ENCODE measurements at regions of chr2 and their contacts with region 1.

Region 1: DNA sequence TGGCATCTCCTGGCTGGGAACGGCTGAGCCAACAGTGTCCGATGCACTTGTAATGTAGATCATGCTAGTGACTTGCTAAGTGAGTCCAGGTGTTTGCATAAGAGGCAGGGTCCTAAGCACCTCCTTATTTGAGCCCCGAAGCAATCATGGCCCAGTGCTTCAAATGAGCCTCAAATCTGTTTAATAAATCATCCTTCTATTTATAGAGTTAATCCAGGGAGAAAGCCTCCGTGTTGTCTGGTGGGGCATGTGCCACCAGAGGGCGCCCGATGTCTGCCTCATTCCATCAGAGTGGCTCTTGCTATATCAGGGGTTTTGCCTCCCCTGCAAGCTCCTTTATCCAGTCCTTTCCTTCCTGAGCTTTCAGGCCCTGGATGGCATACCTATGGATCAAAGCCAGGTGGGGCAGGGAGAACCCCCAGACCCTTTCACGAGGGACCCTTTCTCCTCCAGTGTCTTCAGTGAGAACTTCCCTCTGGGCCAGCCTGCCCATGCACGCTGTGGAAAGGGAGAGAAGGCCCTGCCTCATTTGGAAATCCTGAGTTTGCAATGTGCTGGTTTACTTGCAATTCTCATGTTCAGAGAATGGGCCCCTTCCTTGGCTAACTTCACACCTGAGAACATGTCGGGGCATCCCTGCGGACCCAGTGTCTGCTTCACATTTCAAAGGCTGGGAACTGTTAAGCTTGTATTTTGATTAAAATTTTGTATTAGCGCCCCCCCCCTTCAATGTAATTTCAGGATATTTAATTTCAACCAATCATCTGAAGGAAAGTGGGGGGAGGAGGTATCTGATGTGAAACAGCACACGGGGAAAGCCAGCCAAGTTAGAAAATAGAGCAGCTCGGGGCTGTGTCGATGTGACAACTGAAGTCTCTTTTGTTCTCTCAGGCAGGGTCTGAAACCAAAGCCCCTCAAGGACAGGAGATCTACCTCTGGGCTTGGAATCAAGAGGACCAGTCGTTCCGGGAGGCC is 39.7 kb downstream of the RDH14 start:
- DNase-seq: peak; percentile 88
- ATAC-seq: peak; percentile 68
- H3K4me3 ChIP-seq: no peak overlapping the region
- H3K27ac ChIP-seq: no peak overlapping the region
- H3K4me1 ChIP-seq: peaks cover 35% of the 10 kb centered on the region
- H3K27me3 ChIP-seq: no peaks in the 10 kb centered on the region
- CTCF ChIP-seq: peak; percentile 97

Region 2: GRCh38 chr2:18387441-18388206 is 133.1 kb before region 1 on chr2:
- CTCF ChIA-PET with region 1: no interaction called
- POLR2A ChIA-PET with region 1: no interaction called
- intact Hi-C with region 1: loop called (anchors 1 kb)
- DNase-seq: peak; percentile 88
- ATAC-seq: peak; percentile 94
- H3K4me3 ChIP-seq: no peak overlapping the region
- H3K27ac ChIP-seq: no peak overlapping the region
- H3K4me1 ChIP-seq: no peaks in the 10 kb centered on the region
- H3K27me3 ChIP-seq: no peaks in the 10 kb centered on the region
- CTCF ChIP-seq: peak; percentile 95

Region 3: GRCh38 chr2:18482666-18483065 is 38.1 kb before region 1 on chr2:
- CTCF ChIA-PET with region 1: no interaction called
- POLR2A ChIA-PET with region 1: no interaction called
- intact Hi-C with region 1: loop called (anchors 2 kb)
- DNase-seq: peak; percentile 48
- ATAC-seq: peak; percentile 74
- H3K4me3 ChIP-seq: no peak overlapping the region
- H3K27ac ChIP-seq: no peak overlapping the region
- H3K4me1 ChIP-seq: peaks cover 6% of the 10 kb centered on the region; the same call in 1 of the 2 replicates
- H3K27me3 ChIP-seq: no peaks in the 10 kb centered on the region
- CTCF ChIP-seq: peak; percentile 49; the same call in 1 of the 2 replicates

Region 4: DNA sequence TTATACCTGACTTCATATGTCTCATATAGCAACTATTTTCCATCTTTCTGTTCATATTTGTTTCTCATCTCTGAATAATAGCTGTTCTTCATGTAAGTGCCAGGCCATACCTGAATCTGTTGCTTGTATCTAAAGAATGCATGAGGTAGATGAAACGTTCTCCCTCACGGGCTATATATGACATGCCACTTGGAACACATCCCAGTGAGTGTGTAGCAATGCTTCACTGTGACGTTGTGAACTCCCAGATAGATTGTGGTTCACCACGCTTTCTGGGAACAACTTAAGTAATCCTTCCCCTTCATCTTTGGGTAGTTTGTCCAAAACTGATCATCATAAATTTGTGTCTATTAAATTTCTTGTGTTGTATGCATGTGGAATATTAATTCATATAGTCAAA is 20.4 kb before region 1 on chr2:
- CTCF ChIA-PET with region 1: no interaction called
- POLR2A ChIA-PET with region 1: no interaction called
- intact Hi-C with region 1: no loop called
- DNase-seq: peak; percentile 44
- ATAC-seq: no peak
- H3K4me3 ChIP-seq: no peak overlapping the region
- H3K27ac ChIP-seq: no peak overlapping the region
- H3K4me1 ChIP-seq: no peaks in the 10 kb centered on the region
- H3K27me3 ChIP-seq: 0 out of 2 replicates have a peak, but pooled peaks cover 2% of the 10 kb centered on the region
- CTCF ChIP-seq: no peak

Region 5: DNA sequence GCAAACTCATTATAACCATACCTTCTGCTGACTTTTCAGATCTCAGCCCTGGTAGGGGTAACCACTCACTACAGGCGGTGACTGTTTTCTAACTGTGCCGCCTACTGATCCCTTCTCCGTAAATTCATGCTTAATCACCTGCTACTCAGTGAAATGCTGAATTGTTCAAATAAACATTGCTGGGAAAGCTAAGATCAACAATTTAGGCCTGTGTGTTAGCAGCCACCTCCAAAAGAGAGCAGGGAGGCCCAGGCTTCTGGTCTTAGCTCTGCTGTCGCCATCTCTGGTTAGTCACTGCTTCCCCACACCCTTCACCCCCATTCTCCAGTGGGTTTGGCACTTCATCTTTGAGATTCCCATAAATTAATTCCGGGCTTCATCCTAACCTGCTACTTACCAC is 90.4 kb after region 1 on chr2:
- CTCF ChIA-PET with region 1: no interaction called
- POLR2A ChIA-PET with region 1: no interaction called
- intact Hi-C with region 1: loop called (anchors 5 kb)
- DNase-seq: no peak
- ATAC-seq: no peak
- H3K4me3 ChIP-seq: no peak overlapping the region
- H3K27ac ChIP-seq: no peak overlapping the region
- H3K4me1 ChIP-seq: peaks cover 6% of the 10 kb centered on the region; the same call in 1 of the 2 replicates
- H3K27me3 ChIP-seq: no peaks in the 10 kb centered on the region
- CTCF ChIP-seq: no peak

Region 6: DNA sequence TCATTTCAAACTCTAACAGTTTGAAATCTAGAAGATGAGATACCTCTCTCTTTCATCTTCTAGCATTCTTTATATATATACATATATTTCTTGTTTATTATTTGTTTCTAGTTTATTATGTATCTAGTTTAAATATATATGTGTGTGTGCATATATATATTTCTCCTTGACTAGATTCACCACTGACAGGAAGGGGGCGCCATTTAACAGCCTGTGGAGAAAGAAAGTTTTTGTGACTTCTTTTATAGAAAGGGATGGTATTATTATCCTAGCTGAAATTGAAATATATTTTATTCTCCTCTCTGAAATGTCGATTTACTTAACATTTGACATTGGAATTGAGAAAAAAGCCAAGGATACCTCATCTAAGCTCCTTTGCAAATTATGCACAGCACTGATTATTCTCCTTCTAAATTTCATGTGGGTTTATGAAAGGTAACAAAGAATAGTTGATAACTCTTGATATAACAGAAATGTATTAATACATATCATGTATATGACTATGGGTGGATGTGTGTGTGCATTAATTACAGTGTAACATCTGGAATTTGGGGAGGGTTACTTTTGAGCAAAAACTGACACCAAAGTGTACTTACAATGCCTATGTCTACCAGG is 229.3 kb after region 1 on chr2:
- CTCF ChIA-PET with region 1: interaction called, 4 read pairs
- POLR2A ChIA-PET with region 1: no interaction called
- intact Hi-C with region 1: loop called (anchors 1 kb)
- DNase-seq: peak; percentile 74
- ATAC-seq: no peak
- H3K4me3 ChIP-seq: no peak overlapping the region
- H3K27ac ChIP-seq: no peak overlapping the region
- H3K4me1 ChIP-seq: peaks cover 35% of the 10 kb centered on the region
- H3K27me3 ChIP-seq: no peaks in the 10 kb centered on the region
- CTCF ChIP-seq: peak; percentile 83

Region 7: DNA sequence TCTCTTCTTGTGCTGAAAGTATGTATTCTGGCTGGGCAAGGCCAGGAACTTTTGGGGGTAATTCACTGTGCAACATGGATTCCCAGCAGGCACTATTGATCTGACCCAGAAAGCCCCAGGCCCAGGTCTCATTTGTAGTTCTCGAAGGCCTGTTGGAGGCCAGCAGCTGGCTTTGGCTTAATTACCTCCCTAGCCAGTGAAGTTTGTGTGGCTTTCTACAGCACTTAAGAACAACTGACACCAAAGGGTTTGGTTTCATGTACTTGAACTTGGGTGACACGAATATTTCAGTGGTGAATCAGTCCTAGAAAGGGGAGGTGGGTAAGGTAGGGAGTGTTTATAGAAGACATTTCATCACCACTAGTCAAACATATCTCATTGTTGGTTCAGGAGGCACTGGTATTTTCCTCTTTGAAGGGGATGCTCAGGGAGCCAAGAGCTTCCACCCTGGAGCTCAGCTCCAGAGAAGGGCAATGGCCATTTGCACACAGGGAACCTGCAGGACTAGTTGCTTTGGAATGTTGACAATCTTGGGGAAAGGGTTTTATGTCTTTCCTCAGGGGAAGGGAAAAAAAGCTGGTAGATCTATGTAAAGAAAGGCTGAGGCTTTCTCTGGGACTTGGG is 620.0 kb after region 1 on chr2:
- CTCF ChIA-PET with region 1: no interaction called
- POLR2A ChIA-PET with region 1: no interaction called
- intact Hi-C with region 1: loop called (anchors 2 kb)
- DNase-seq: peak; percentile 99
- ATAC-seq: peak; percentile 94
- H3K4me3 ChIP-seq: peak overlapping the region; percentile 4; the same call in 1 of the 2 replicates
- H3K27ac ChIP-seq: peak overlapping the region; percentile 85
- H3K4me1 ChIP-seq: peaks cover 55% of the 10 kb centered on the region
- H3K27me3 ChIP-seq: no peaks in the 10 kb centered on the region
- CTCF ChIP-seq: no peak

Measured in PC-3 (cell line).